PC-3 (cell line): ENCODE measurements at regions of chr9 and their contacts with region 1.

Region 1: DNA sequence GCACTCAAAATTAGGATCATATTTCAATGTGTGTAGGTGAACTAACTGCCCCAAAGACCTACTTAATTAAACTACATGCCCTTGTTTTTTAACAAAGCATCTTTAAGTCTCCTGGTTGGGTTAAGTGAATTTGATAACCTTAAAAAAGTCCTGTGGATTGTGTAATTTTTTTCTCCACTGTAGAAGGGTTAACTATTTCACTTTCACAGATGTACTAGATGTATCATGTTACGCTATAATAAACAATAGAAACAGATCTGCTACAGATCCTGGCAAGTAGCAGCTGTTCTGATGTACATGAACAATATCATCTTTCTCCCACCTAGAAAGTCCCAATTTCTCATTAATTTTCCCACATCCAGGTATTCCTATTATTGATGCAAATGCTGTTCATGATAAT is 18.9 kb downstream of the KIF24 start:
- DNase-seq: no peak
- ATAC-seq: no peak
- H3K4me3 ChIP-seq: no peak overlapping the region
- H3K27ac ChIP-seq: no peak overlapping the region
- H3K4me1 ChIP-seq: peaks cover 7% of the 10 kb centered on the region; the same call in 1 of the 2 replicates
- H3K27me3 ChIP-seq: no peaks in the 10 kb centered on the region
- CTCF ChIP-seq: no peak

Region 2: DNA sequence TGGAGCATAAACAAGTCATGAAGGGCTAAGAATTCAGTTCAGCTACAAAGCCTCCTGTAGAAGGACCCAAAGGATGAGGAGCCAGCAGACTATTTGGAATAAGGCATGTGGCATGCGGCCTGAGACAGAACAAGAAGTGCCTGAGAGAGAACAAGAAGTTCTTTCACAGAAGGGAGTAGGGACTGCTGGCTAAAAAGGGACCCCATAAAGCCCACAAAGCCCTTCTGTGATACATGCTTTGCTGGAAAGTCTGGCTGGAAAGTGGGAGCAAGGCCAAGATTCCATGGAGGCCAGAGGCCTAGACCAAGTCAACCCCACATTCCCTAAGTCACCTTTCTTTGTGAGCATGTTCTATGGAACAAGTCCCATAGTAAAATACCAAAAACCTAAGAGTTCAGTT is 225.6 kb before region 1 on chr9:
- CTCF ChIA-PET with region 1: no interaction called
- POLR2A ChIA-PET with region 1: interaction called, 11 read pairs
- intact Hi-C with region 1: no loop called
- DNase-seq: no peak
- ATAC-seq: no peak
- H3K4me3 ChIP-seq: no peak overlapping the region
- H3K27ac ChIP-seq: no peak overlapping the region
- H3K4me1 ChIP-seq: no peaks in the 10 kb centered on the region
- H3K27me3 ChIP-seq: no peaks in the 10 kb centered on the region
- CTCF ChIP-seq: no peak